Activated T-helper 1 cell treated with anti-CD3 and anti-CD28 coated beads, Interleukin-12 subunit alpha, Interleukin-12 subunit beta, Interleukin-2, Interleukin-4 antibody, amounts not matched to agents 30 ng/mL and 10 ng/mL and 1 ng/mL, durations not matched to agents 14 hours and 24 hours and 36 hours (primary cell): ENCODE measurements at regions of chr14 and their contacts with region 1.

Region 1: GRCh38 chr14:50520947-50521815 is 11.2 kb downstream of the MAP4K5 start:
- DNase-seq: peak; percentile 33
- H3K4me3 Mint-ChIP-seq: peak overlapping the region; percentile 61
- H3K27ac Mint-ChIP-seq: peak overlapping the region; percentile 95
- H3K4me1 Mint-ChIP-seq: peaks cover 41% of the 10 kb centered on the region
- H3K27me3 Mint-ChIP-seq: no peaks in the 10 kb centered on the region

Region 2: DNA sequence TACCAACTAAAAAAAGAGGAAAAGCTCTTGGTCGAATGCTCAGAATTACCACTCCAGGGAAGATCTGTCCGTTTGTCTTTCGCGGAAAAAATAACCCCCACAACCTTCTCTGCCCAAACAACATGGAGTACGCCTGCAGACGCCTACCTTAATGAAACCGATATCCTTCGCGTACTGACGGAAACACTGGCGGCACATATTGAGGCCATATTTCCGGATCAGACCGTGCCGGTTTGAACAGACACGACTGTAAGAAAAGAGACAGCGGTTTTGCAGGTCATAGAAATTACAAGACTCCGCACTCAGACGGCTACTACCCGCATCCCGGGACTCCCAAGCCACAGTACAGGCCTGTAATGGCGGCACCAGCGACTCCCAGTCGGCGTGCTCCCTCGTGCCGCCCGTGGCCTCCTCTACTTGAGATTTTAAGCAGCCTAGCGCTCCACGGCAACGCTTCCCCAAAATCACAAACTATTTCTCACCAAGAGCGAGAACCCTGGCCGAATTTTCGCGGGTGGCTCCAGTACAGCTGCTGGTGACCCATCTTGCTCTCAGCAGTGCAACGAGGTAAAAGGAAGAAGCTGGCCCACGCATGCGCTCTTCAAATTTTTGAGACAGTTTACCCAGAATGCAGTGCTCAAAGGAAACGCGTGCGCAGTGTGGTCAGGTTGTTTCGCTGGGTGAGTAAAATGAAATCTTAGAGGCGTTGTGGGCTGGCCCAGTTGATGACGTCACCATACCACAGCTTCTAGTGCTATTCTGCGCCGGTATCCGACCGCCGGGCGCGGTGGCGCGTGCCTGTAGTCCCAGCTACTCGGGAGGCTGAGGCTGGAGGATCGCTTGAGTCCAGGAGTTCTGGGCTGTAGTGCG is 935.1 kb before region 1 on chr14 and contains the start of gene RPS29:
- intact Hi-C with region 1: loop called (anchors 5 kb)
- DNase-seq: peak; percentile 97
- H3K4me3 Mint-ChIP-seq: peak within 1 kb of the TSS; percentile 93
- H3K27ac Mint-ChIP-seq: peak within 1 kb of the TSS; percentile 99
- H3K4me1 Mint-ChIP-seq: peaks cover 46% of the 10 kb centered on the region
- H3K27me3 Mint-ChIP-seq: peaks cover 3% of the 10 kb centered on the region
- total RNA-seq, gene RPS29: 1,860 and 1,913 TPM in 2 replicates

Region 3: DNA sequence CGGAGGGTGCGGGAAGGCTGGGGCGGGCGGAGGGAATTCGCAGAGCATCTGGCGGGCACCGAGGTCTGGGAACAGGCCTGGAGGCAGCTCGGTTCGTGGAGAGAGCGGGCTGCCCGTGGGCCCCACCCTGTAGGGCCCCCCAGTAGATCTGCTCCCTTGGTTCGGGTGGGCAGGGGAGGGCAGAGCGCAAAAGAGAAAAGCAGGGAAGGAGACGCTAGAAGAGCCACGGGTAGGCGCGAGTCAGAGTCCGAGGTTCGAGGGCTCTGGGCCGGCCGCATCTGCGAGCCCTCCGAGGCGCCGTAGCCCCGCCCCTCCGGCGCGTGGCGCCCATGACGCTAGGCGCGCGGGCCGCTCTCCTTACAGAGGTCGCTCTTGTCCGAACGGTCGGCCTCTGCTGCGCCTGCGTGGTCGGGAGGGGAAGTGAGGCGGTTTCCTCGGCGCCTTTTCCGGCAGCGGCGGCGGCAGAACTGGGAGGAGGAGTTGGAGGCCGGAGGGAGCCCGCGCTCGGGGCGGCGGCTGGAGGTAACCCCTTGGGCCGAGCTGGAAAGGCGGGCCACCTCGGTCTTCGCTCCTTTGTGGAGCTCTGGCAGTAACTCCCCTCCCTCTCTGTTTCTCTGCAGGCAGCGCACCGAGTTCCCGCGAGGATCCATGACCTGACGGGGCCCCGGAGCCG is 628.4 kb before region 1 on chr14 and contains the start of gene ARF6:
- intact Hi-C with region 1: loop called (anchors 5 kb)
- DNase-seq: peak; percentile 97
- H3K4me3 Mint-ChIP-seq: peak within 1 kb of the TSS; percentile 99
- H3K27ac Mint-ChIP-seq: peak within 1 kb of the TSS; percentile 100
- H3K4me1 Mint-ChIP-seq: peaks cover 19% of the 10 kb centered on the region
- H3K27me3 Mint-ChIP-seq: peaks cover 2% of the 10 kb centered on the region
- total RNA-seq, gene ARF6: 163 and 164 TPM in 2 replicates

Region 4: GRCh38 chr14:50116181-50116956 is 404.8 kb before region 1 on chr14 and contains the start of gene VCPKMT:
- intact Hi-C with region 1: loop called (anchors 1 kb)
- DNase-seq: peak; percentile 95
- H3K4me3 Mint-ChIP-seq: peak within 1 kb of the TSS; percentile 97
- H3K27ac Mint-ChIP-seq: peak within 1 kb of the TSS; percentile 98
- H3K4me1 Mint-ChIP-seq: peaks cover 33% of the 10 kb centered on the region
- H3K27me3 Mint-ChIP-seq: no peaks in the 10 kb centered on the region
- total RNA-seq, gene VCPKMT: 12.3 and 15.2 TPM in 2 replicates

Region 5: DNA sequence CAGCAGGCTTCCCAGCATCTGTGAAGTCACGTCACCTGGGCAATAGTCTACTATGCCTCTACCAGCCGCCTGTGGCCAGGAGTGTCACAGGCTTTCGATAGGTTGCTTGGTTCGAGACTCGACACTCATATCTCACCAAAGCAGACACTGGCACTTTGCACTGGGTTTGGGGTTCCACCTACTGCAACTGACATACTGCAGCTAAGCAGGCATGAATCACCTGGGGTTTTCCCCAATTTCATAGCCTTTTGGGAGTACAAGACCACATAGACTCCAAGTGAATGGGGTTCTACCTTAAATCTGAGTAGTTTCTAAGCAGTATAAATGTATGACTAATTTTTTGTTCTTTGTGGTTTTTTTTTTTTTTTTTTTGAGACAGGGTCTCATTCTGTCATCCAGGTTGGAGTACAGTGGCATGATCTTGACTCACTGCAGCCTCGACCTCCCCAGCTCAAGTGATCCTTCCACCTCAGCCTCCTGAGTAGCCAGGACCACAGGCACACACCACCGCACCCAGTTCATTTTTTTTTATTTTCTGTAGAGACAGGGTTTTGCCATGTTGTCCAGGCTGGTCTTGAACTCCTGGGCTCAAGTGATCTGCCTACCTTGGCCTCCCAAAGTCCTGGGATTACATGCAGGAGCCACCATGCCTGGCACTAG is 176.9 kb before region 1 on chr14:
- intact Hi-C with region 1: loop called (anchors 1 kb)
- DNase-seq: peak; percentile 47
- H3K4me3 Mint-ChIP-seq: peak overlapping the region; percentile 30
- H3K27ac Mint-ChIP-seq: peak overlapping the region; percentile 69
- H3K4me1 Mint-ChIP-seq: peaks cover 32% of the 10 kb centered on the region
- H3K27me3 Mint-ChIP-seq: peaks cover 18% of the 10 kb centered on the region

Region 6: DNA sequence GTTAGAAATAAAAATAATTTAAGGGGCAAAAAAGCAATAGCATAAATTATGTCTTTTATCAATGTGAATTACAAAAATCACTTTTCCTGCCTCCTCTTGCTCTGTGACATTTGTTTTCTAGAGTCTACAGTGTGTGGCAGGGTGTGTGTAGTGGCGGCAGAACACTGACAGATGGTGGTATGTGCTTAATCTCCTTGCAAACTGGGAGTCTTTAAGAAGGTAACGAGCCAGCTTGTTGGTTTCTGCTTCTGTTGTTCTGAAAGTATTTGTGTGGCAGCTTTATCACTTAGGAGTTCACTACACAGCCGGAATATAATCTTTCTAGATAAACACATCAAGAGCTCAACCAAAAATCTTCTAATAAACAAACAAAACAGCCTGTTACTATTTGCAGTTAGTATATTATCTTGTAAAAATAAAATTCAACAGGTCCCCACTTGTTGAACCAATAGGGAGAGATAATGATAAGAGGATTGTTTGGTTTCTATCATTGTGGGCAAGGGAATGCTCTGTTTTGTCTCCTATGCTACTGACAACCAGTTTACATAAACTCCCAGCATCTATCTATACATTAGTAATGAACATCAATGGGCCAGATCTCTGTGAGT is 137.5 kb before region 1 on chr14:
- intact Hi-C with region 1: no loop called
- DNase-seq: no peak
- H3K4me3 Mint-ChIP-seq: no peak overlapping the region
- H3K27ac Mint-ChIP-seq: no peak overlapping the region
- H3K4me1 Mint-ChIP-seq: no peaks in the 10 kb centered on the region
- H3K27me3 Mint-ChIP-seq: peaks cover 3% of the 10 kb centered on the region

Region 7: GRCh38 chr14:50532502-50533240 is 11.5 kb after region 1 on chr14 and contains the start of gene MAP4K5:
- intact Hi-C with region 1: loop called (anchors 1 kb)
- DNase-seq: peak; percentile 82
- H3K4me3 Mint-ChIP-seq: peak within 1 kb of the TSS; percentile 92
- H3K27ac Mint-ChIP-seq: peak within 1 kb of the TSS; percentile 79
- H3K4me1 Mint-ChIP-seq: peaks cover 42% of the 10 kb centered on the region
- H3K27me3 Mint-ChIP-seq: peaks cover 24% of the 10 kb centered on the region
- total RNA-seq, gene MAP4K5: 26.4 and 27.5 TPM in 2 replicates

Region 8: DNA sequence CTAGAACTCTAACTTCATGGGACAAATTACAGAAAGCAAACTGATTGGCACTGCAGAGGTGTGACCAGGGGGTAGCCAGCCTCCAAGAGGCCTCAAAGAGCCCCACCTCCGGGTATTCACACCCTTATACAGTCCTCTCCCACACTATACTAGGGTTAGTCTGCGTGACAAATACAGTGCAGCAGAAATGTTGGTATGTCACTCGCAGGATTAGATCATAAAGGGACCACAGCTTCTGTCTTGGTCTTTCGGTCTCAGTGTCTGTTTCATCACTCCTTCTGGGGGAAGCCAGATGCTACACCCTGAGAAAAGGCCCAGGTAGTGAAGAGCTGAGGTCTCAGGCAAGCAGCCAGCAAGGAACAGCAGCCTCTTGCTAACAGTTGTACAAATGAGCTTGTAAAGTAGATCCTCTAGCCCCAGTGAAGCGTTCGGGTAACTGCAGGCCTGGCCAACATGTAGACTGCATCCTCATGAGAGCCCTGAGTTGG is 215.8 kb after region 1 on chr14:
- intact Hi-C with region 1: loop called (anchors 1 kb)
- DNase-seq: peak; percentile 18
- H3K4me3 Mint-ChIP-seq: no peak overlapping the region
- H3K27ac Mint-ChIP-seq: peak overlapping the region; percentile 87
- H3K4me1 Mint-ChIP-seq: peaks cover 45% of the 10 kb centered on the region
- H3K27me3 Mint-ChIP-seq: no peaks in the 10 kb centered on the region